CD4-positive, alpha-beta memory T cell (primary cell): ENCODE measurements at regions of chr3 and their contacts with region 1.

Region 1: DNA sequence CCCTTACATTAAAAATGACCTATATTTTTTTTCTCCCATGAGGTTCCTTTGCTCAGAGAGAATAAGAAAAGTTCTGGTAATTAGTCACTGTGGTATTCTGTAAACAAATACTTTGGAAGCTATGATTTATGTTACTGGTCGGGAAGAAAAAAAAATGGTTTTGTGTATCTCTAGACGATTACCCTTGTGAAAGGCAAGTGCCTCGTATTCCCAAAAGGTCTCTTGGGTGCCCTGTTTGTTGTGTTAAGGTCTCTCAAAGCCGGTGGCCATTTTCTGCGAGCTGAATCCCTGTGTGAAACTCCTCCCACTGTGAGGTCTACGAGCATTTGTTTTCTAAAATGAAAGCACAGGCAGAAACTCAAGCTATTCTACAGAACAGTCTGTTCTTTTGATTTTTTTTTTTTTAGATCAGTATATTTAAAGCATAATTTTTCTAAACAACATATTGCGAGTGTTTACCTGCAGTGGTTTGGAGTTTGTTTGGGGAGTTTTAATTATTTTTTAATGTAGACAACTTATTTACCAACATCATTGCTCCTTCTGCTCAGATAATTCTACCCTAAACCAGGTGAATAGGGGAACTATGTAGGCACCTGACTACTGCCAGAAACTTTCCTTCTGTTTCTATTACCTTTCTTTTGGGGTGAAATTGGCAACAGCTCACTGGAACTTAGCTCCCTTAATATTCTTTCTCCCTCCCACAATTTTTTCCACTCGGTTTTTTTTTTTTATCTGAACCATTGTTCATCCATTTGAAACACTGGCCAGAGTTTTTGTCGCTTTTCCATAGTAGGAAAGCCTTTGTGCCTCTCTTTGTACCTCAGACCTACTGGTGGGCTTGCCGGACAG is 44.0 kb downstream of the ZBTB38 start:
- DNase-seq: peak; percentile 66 to 76 (median 72)
- H3K4me3 ChIP-seq: peak overlapping the region in 1 of 2 donors; percentile 21
- H3K4me3 Mint-ChIP-seq: peak overlapping the region; percentile 67 to 90 (median 86)
- H3K27ac ChIP-seq: peak overlapping the region; percentile 77
- H3K27ac Mint-ChIP-seq: peak overlapping the region; percentile 94 to 100 (median 99)
- H3K4me1 ChIP-seq: peaks cover 71% of the 10 kb centered on the region
- H3K4me1 Mint-ChIP-seq: peaks cover 57 to 85% (median 73%) of the 10 kb centered on the region in 4 donors
- H3K27me3 ChIP-seq: no peaks in the 10 kb centered on the region
- H3K27me3 Mint-ChIP-seq: no peaks in the 10 kb centered on the region

Region 2: GRCh38 chr3:140724856-140725812 is 687.2 kb before region 1 on chr3:
- CTCF ChIA-PET with region 1: no interaction called
- POLR2A ChIA-PET with region 1: no interaction called
- intact Hi-C with region 1: no loop called
- DNase-seq: no peak
- H3K4me3 ChIP-seq: no peak overlapping the region
- H3K4me3 Mint-ChIP-seq: no peak overlapping the region
- H3K27ac ChIP-seq: no peak overlapping the region
- H3K27ac Mint-ChIP-seq: no peak overlapping the region
- H3K4me1 ChIP-seq: no peaks in the 10 kb centered on the region
- H3K4me1 Mint-ChIP-seq: no peaks in the 10 kb centered on the region
- H3K27me3 ChIP-seq: no peaks in the 10 kb centered on the region
- H3K27me3 Mint-ChIP-seq: no peaks in the 10 kb centered on the region

Region 3: GRCh38 chr3:141311496-141312353 is 100.6 kb before region 1 on chr3:
- CTCF ChIA-PET with region 1: interaction called, 5 read pairs
- POLR2A ChIA-PET with region 1: interaction called, 29 read pairs
- intact Hi-C with region 1: no loop called
- DNase-seq: peak; percentile 97 to 99 (median 98)
- H3K4me3 ChIP-seq: peak overlapping the region; percentile 68 to 73
- H3K4me3 Mint-ChIP-seq: peak overlapping the region; percentile 92 to 100 (median 98)
- H3K27ac ChIP-seq: peak overlapping the region; percentile 66
- H3K27ac Mint-ChIP-seq: peak overlapping the region; percentile 89 to 99 (median 97)
- H3K4me1 ChIP-seq: peaks cover 46% of the 10 kb centered on the region
- H3K4me1 Mint-ChIP-seq: peaks cover 32 to 60% (median 49%) of the 10 kb centered on the region in 4 donors
- H3K27me3 ChIP-seq: no peaks in the 10 kb centered on the region
- H3K27me3 Mint-ChIP-seq: no peaks in the 10 kb centered on the region

Region 4: DNA sequence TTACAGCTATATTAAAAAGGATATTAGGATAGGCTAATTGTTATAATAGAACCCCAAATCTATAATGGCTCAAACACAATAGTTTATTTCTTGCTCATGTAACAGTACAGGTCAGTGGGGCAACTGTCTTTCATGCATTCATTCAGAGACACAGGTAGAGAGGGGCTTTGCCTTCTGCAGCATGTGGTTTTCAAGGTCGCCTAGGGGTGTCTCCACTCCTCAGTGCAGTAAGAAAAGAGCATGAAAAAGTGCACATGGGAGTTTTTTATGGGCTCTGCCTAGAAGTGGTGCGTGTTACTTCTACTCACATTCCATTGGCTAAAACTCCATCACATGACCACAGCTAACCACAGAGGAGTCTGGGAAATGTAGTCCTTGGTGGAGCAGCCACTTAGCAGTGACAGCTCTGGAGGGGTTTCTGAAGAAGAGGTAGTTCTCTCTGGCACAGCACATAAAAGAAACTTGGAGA is 42.2 kb before region 1 on chr3:
- CTCF ChIA-PET with region 1: interaction called, 6 read pairs
- POLR2A ChIA-PET with region 1: interaction called, 14 read pairs
- intact Hi-C with region 1: loop called (anchors 2 kb)
- DNase-seq: peak; percentile 82 to 88 (median 84)
- H3K4me3 ChIP-seq: no peak overlapping the region
- H3K4me3 Mint-ChIP-seq: no peak overlapping the region
- H3K27ac ChIP-seq: no peak overlapping the region
- H3K27ac Mint-ChIP-seq: peak overlapping the region in 6 of 7 donors; percentile 30 to 90 (median 58)
- H3K4me1 ChIP-seq: no peaks in the 10 kb centered on the region
- H3K4me1 Mint-ChIP-seq: peaks cover 5 to 11% (median 8%) of the 10 kb centered on the region in 4 donors
- H3K27me3 ChIP-seq: no peaks in the 10 kb centered on the region
- H3K27me3 Mint-ChIP-seq: no peaks in the 10 kb centered on the region

Region 5: DNA sequence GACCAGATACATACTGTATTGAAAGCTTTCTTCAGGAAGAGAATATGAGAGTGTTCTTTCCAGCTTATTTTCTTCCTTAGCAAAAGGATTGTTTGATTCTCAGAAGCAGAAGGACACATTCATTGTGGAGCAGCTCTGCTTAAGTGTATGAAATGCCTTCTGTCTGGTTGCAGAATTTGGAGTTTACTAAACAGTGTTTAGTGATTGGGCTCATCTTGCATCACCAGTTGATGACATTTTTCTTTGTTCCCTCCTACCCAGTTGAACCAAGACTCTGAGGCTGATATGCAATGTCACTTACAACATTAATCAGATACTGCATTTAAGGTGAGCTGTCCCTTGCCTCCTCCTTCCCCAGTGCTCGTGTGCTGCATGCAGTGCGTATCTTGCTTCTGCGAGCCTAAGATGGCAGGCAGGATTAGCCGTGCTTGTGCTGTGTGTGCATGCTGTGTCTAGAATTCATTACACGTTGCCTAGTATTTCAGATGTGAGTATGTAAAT is 25.6 kb before region 1 on chr3:
- CTCF ChIA-PET with region 1: interaction called, 13 read pairs
- POLR2A ChIA-PET with region 1: interaction called, 196 read pairs
- intact Hi-C with region 1: no loop called
- DNase-seq: no peak
- H3K4me3 ChIP-seq: peak overlapping the region in 1 of 2 donors; percentile 17
- H3K4me3 Mint-ChIP-seq: peak overlapping the region; percentile 85 to 91 (median 88)
- H3K27ac ChIP-seq: peak overlapping the region; percentile 33
- H3K27ac Mint-ChIP-seq: peak overlapping the region; percentile 45 to 89 (median 86)
- H3K4me1 ChIP-seq: peaks cover 15% of the 10 kb centered on the region
- H3K4me1 Mint-ChIP-seq: peaks cover 17 to 23% (median 20%) of the 10 kb centered on the region in 4 donors
- H3K27me3 ChIP-seq: no peaks in the 10 kb centered on the region
- H3K27me3 Mint-ChIP-seq: no peaks in the 10 kb centered on the region

Region 6: GRCh38 chr3:141452036-141452435 is 39.7 kb after region 1 on chr3:
- CTCF ChIA-PET with region 1: interaction called, 14 read pairs
- POLR2A ChIA-PET with region 1: interaction called, 3 read pairs
- intact Hi-C with region 1: no loop called
- DNase-seq: peak; percentile 57 to 64 (median 62)
- H3K4me3 ChIP-seq: no peak overlapping the region
- H3K4me3 Mint-ChIP-seq: no peak overlapping the region
- H3K27ac ChIP-seq: no peak overlapping the region
- H3K27ac Mint-ChIP-seq: no peak overlapping the region
- H3K4me1 ChIP-seq: peaks cover 18% of the 10 kb centered on the region
- H3K4me1 Mint-ChIP-seq: peaks cover 7 to 14% (median 10%) of the 10 kb centered on the region in 4 donors
- H3K27me3 ChIP-seq: no peaks in the 10 kb centered on the region
- H3K27me3 Mint-ChIP-seq: no peaks in the 10 kb centered on the region